Activated B cell treated with CpG ODN at 0.5 μM for 24 hours (primary cell): ENCODE measurements at regions of chr2 and their contacts with region 1.

Region 1: GRCh38 chr2:112275306-112275886 is at the start of gene ZC3H6:
- DNase-seq: peak; percentile 100
- ATAC-seq: peak; percentile 88
- H3K4me3 Mint-ChIP-seq: peak within 1 kb of the TSS; percentile 95
- H3K27ac Mint-ChIP-seq: peak within 1 kb of the TSS; percentile 99
- H3K4me1 Mint-ChIP-seq: peaks cover 17% of the 10 kb centered on the region
- H3K27me3 Mint-ChIP-seq: no peaks in the 10 kb centered on the region
- CTCF ChIP-seq: no peak
- total RNA-seq, gene ZC3H6: 7.0 and 7.3 TPM in 2 replicates

Region 2: DNA sequence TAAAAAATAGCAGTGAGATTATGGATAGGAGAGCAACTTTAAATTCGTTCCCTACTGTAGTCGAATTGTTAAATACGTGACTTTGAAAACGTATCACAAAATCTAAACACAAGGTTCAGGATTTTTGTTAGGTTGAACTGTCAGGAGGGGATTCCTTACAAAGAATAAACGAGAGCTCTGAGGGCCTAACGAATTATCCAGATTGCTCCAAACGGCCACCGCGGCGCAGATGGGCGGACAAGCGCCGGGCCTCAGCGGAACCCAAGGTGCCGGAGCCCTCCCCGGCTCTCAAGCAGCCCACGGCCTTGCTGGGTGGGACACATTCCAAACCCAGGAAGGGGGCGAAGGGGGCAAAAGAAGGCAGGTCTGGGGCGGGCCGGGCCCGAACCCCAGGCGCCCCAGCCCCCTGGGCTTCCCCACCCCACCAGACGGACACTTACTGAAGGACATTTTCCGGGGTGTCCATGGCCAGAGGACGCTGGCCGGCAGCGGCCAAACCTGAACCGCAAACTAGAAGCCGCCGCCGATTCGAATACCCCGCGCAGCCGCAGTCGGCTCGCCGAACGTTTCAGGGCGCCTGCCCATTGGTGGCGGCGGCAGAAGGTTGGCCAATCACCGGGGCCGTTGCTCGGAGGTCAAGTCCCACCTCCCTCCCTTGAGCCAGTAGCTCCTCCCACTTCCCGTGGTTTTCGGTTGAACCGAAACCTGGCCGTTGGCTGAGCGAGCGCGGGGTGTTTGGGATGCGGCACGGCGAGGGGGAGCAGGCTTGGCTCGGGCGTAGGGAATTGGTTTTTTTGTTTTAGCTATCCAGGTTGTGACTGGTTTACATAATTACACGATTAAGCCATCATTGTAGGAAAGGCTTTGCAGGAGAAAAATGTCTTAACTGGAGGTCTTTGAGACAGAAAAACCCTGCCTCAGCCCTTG is 1597.6 kb before region 1 on chr2 and contains the start of gene BUB1:
- CTCF ChIA-PET with region 1: no interaction called
- POLR2A ChIA-PET with region 1: no interaction called
- intact Hi-C with region 1: loop called (anchors 10 kb)
- DNase-seq: peak; percentile 89
- ATAC-seq: peak; percentile 92
- H3K4me3 Mint-ChIP-seq: peak within 1 kb of the TSS; percentile 96
- H3K27ac Mint-ChIP-seq: peak within 1 kb of the TSS; percentile 97
- H3K4me1 Mint-ChIP-seq: peaks cover 34% of the 10 kb centered on the region
- H3K27me3 Mint-ChIP-seq: no peaks in the 10 kb centered on the region
- CTCF ChIP-seq: no peak
- total RNA-seq, gene BUB1: 5.9 and 6.2 TPM in 2 replicates

Region 3: DNA sequence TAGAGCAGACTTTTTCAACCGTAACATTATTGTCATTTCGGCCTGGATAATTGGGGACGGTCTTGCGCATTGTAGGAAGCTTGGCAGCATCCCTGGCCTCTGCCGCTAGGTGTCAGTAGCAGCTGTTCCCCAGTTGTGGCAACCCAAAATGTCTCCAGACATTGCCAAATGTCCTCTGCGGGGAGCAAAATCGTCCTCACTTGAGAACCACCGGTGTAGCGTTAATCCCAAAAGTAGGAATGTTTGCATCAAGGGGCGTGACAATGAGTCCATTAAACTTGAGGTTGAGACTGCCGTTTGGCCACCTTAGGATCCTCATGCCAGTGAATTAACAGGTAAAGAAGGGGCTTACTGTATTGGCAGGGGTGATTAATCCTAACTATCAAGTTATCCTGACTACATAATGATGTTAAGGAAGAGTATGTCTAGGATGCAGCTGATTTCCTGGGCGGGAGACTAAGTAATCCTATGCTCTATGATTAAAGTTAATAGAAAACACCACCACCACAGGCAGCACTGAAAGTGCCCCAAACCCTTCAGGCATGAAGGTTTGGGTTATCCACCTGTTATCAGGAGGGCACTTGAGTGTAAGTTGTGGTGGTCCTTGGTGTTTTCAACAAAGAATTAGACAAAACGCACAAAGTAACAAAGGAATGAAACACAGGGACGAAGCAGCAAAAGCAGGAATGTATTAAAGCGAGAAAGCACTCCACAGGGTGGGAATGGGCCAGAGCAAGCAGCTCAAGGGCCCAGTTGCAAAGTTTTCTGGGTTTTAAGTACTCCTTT is 15.7 kb before region 1 on chr2:
- CTCF ChIA-PET with region 1: interaction called, 8 read pairs
- POLR2A ChIA-PET with region 1: interaction called, 37 read pairs
- intact Hi-C with region 1: loop called (anchors 1 kb)
- DNase-seq: peak; percentile 66
- ATAC-seq: peak; percentile 38
- H3K4me3 Mint-ChIP-seq: peak overlapping the region; percentile 75
- H3K27ac Mint-ChIP-seq: no peak overlapping the region
- H3K4me1 Mint-ChIP-seq: peaks cover 14% of the 10 kb centered on the region
- H3K27me3 Mint-ChIP-seq: no peaks in the 10 kb centered on the region
- CTCF ChIP-seq: peak; percentile 68

Region 4: DNA sequence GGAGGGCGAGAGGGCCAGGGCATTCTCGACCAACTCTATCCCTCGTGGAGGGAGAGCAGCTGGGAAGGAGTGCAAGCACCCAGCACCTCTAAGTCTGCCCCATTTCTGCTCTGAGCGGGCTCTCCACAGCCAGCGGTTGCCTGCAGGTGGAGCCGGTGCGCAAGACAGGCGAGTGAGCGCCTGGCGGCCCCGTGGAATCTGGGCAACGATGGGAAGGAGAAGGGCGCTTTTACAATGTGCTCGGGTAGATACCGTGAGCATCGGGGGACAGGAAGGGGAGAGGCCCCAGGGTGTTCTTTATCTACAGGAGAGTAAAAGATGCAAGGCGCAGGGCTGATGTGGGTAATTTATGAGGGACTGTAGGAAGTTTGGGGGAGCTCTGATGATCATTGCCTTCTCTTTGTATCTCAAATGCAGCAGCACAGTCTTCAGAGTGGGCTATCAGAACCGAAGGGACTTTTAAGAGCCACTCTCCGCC is 205.7 kb after region 1 on chr2:
- CTCF ChIA-PET with region 1: no interaction called
- POLR2A ChIA-PET with region 1: interaction called, 5 read pairs
- intact Hi-C with region 1: loop called (anchors 1 kb)
- DNase-seq: peak; percentile 71
- ATAC-seq: peak; percentile 73
- H3K4me3 Mint-ChIP-seq: peak overlapping the region; percentile 98
- H3K27ac Mint-ChIP-seq: peak overlapping the region; percentile 97
- H3K4me1 Mint-ChIP-seq: peaks cover 22% of the 10 kb centered on the region
- H3K27me3 Mint-ChIP-seq: no peaks in the 10 kb centered on the region
- CTCF ChIP-seq: no peak

Region 5: GRCh38 chr2:112542123-112542983 is 267.0 kb after region 1 on chr2 and contains the start of gene POLR1B:
- CTCF ChIA-PET with region 1: no interaction called
- POLR2A ChIA-PET with region 1: no interaction called
- intact Hi-C with region 1: loop called (anchors 1 kb)
- DNase-seq: peak; percentile 72
- ATAC-seq: peak; percentile 77
- H3K4me3 Mint-ChIP-seq: no peak within 1 kb of the TSS
- H3K27ac Mint-ChIP-seq: no peak within 1 kb of the TSS
- H3K4me1 Mint-ChIP-seq: peaks cover 19% of the 10 kb centered on the region
- H3K27me3 Mint-ChIP-seq: no peaks in the 10 kb centered on the region
- CTCF ChIP-seq: no peak
- total RNA-seq, gene POLR1B: 43.1 and 48.8 TPM in 2 replicates

Region 6: GRCh38 chr2:112584134-112584890 is 308.9 kb after region 1 on chr2 and contains the start of gene CHCHD5:
- CTCF ChIA-PET with region 1: no interaction called
- POLR2A ChIA-PET with region 1: no interaction called
- intact Hi-C with region 1: loop called (anchors 5 kb)
- DNase-seq: peak; percentile 84
- ATAC-seq: peak; percentile 85
- H3K4me3 Mint-ChIP-seq: peak within 1 kb of the TSS; percentile 96
- H3K27ac Mint-ChIP-seq: peak within 1 kb of the TSS; percentile 96
- H3K4me1 Mint-ChIP-seq: peaks cover 35% of the 10 kb centered on the region
- H3K27me3 Mint-ChIP-seq: no peaks in the 10 kb centered on the region
- CTCF ChIP-seq: no peak
- total RNA-seq, gene CHCHD5: 26.0 and 28.4 TPM in 2 replicates

Region 7: DNA sequence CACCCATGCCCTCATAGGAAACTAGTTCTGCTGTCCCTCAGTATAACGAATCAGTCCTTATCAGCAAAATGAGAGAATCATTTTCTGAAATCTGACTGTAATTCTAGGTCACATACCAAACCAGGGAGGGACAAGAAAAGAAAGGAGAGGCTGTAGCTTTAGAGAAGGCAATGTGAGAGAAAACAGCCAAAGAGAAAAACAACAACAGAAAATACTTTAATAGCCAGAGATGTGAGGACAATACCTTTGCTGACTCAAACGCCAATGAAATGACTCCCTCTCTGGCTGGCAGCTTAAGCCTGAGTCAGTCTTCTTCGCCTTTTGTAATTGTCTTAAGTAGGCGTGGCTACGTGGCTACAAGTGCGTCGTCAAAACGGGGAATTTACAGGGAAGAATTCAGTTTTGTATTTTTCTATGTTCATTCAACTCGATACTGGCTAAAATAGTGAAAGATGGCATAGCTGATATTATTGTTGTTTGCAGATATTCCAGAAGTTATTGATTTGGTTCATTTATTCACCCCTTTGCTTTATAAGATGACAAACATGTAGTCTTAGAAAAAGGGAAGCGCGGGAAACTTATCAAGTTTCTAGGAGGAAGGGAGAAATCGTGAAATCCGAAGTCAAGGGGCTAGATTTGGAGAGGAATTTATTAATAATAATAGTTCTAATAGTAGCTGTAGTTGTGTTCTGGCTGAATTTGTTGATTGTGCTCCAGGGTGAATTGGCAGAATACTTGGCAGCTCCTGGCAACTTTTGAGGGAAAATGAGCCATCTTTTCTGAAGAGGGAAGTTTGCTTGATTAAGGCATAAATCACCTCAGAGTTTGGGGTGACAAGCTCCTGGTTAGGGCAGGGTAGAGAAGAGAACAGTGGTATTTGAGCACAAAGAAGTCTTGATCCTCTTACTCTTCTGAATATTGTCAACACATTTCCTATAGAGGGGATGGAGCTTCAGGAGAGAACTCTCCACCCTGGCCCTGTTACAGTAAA is 509.1 kb after region 1 on chr2 and contains the start of gene IL1A:
- CTCF ChIA-PET with region 1: no interaction called
- POLR2A ChIA-PET with region 1: no interaction called
- intact Hi-C with region 1: no loop called
- DNase-seq: no peak
- ATAC-seq: peak; percentile 32
- H3K4me3 Mint-ChIP-seq: peak within 1 kb of the TSS; percentile 73
- H3K27ac Mint-ChIP-seq: peak within 1 kb of the TSS; percentile 88
- H3K4me1 Mint-ChIP-seq: peaks cover 39% of the 10 kb centered on the region
- H3K27me3 Mint-ChIP-seq: no peaks in the 10 kb centered on the region
- CTCF ChIP-seq: no peak
- total RNA-seq, gene IL1A: 1.4 and 1.9 TPM in 2 replicates

Region 8: GRCh38 chr2:113370478-113371091 is 1095.2 kb after region 1 on chr2:
- CTCF ChIA-PET with region 1: no interaction called
- POLR2A ChIA-PET with region 1: no interaction called
- intact Hi-C with region 1: no loop called
- DNase-seq: peak; percentile 24
- ATAC-seq: peak; percentile 89
- H3K4me3 Mint-ChIP-seq: no peak overlapping the region
- H3K27ac Mint-ChIP-seq: no peak overlapping the region
- H3K4me1 Mint-ChIP-seq: peaks cover 33% of the 10 kb centered on the region
- H3K27me3 Mint-ChIP-seq: no peaks in the 10 kb centered on the region
- CTCF ChIP-seq: no peak